Sigmoid colon (tissue), 7 donors: ENCODE measurements at regions of chr6 and their contacts with region 1.

Region 1: DNA sequence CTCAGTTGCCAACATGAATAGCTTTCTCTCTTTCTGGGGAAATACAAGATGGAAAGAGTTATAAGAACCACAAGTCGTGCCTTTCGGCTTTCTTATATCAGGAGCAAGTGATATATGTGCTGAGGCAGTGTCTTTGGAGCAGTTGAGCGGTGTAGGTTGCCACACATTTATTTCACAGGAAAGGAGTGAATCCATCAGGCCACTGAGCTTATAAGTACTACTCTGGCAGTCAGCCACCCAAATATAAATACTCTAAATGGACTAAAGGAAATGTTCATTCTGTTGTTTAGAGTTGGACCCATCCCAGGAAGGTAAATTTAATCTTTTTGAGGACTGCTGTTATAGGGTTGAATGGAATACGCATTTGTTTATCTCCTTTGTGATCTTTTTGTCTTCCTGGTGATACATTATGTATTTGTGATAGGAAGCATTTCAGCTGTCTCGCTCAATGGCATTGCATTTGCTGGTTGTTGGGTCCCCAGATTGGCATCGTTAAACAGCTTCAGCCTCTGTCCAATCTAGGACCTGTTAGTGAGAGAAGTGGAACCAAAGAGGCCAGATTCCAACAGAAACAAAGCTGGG is 139.7 kb downstream of the SOBP start:
- DNase-seq: no peak
- H3K4me3 ChIP-seq: no peak overlapping the region
- H3K27ac ChIP-seq: peak overlapping the region in 3 of 4 donors; percentile 48 to 62 (median 58)
- H3K4me1 ChIP-seq: peaks cover 0 to 34% (median 28%) of the 10 kb centered on the region in 4 donors
- H3K27me3 ChIP-seq: peaks cover 0 to 8% (median 8%) of the 10 kb centered on the region in 3 donors
- CTCF ChIP-seq: no peak
- EP300 ChIP-seq: no peak
- POLR2A ChIP-seq: no peak

Region 2: DNA sequence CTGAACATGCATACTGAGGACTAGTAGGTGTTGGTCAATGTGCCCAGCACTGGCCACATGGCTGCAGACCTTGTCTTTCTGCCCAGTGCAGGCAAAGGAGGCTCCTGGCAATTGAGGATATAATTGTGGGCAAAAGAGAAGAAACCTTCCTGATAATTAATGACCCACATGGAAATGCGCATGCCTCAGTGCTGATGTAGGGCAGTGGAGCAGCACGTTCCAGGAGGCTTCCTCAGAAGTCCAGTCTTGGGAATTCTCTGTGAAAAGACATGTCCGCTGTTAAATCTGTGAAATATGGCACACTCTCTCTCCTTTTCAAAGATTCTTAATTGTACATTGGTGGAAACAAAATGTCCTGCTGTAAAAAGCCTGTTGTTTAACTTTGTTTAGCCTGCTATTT is 105.0 kb before region 1 on chr6:
- intact Hi-C with region 1: no loop called
- DNase-seq: no peak
- H3K4me3 ChIP-seq: no peak overlapping the region
- H3K27ac ChIP-seq: no peak overlapping the region
- H3K4me1 ChIP-seq: peaks cover 0 to 22% (median 8%) of the 10 kb centered on the region in 4 donors
- H3K27me3 ChIP-seq: no peaks in the 10 kb centered on the region
- CTCF ChIP-seq: no peak
- EP300 ChIP-seq: no peak
- POLR2A ChIP-seq: no peak

Region 3: GRCh38 chr6:107539409-107539808 is 90.2 kb before region 1 on chr6:
- intact Hi-C with region 1: no loop called
- DNase-seq: no peak
- H3K4me3 ChIP-seq: no peak overlapping the region
- H3K27ac ChIP-seq: no peak overlapping the region
- H3K4me1 ChIP-seq: peaks cover 0 to 45% (median 17%) of the 10 kb centered on the region in 4 donors
- H3K27me3 ChIP-seq: no peaks in the 10 kb centered on the region
- CTCF ChIP-seq: no peak
- EP300 ChIP-seq: no peak
- POLR2A ChIP-seq: no peak

Region 4: GRCh38 chr6:107560657-107561056 is 69.0 kb before region 1 on chr6:
- intact Hi-C with region 1: loop called (anchors 2 kb)
- DNase-seq: peak; percentile 68
- H3K4me3 ChIP-seq: no peak overlapping the region
- H3K27ac ChIP-seq: peak overlapping the region; percentile 54 to 79 (median 75)
- H3K4me1 ChIP-seq: peaks cover 0 to 41% (median 34%) of the 10 kb centered on the region in 4 donors
- H3K27me3 ChIP-seq: no peaks in the 10 kb centered on the region
- CTCF ChIP-seq: no peak
- EP300 ChIP-seq: no peak
- POLR2A ChIP-seq: no peak